ENCODE measurements at regions of chr15 and their contacts with region 1.

Region 1: GRCh38 chr15:99628374-99629001 is 62.7 kb downstream of the MEF2A start:
- DNase-seq: no peak
- H3K4me3 Mint-ChIP-seq: peak overlapping the region; percentile 4
- H3K27ac Mint-ChIP-seq: peak overlapping the region; percentile 28
- H3K4me1 Mint-ChIP-seq: peaks cover 45% of the 10 kb centered on the region
- H3K27me3 Mint-ChIP-seq: no peaks in the 10 kb centered on the region
- CTCF ChIP-seq: no peak

Region 2: GRCh38 chr15:99250494-99251435 is 377.7 kb before region 1 on chr15:
- CTCF ChIA-PET with region 1: no interaction called
- intact Hi-C with region 1: loop called (anchors 5 kb)
- DNase-seq: peak; percentile 98
- H3K4me3 Mint-ChIP-seq: no peak overlapping the region
- H3K27ac Mint-ChIP-seq: peak overlapping the region; percentile 91
- H3K4me1 Mint-ChIP-seq: peaks cover 24% of the 10 kb centered on the region
- H3K27me3 Mint-ChIP-seq: no peaks in the 10 kb centered on the region
- CTCF ChIP-seq: no peak

Region 3: DNA sequence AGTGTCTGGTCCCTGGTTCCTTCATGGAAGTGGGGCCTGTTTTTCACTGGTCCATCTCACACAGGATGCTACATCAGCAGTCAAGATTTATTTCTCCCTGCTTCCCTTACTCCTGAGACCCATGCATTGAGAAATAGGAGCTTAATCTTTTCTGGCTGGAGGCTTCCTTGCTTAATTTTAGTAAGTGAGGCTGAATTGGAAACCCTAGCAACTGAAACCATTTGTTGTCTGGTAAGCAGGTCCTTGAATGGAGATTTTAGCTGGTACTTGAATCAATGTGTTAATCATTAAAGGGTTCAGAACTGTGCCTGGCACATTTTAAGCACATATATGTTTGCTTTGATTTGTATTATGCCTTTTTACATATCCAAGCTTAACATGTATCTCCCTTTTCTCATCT is 82.9 kb before region 1 on chr15:
- CTCF ChIA-PET with region 1: no interaction called
- intact Hi-C with region 1: no loop called
- DNase-seq: no peak
- H3K4me3 Mint-ChIP-seq: no peak overlapping the region
- H3K27ac Mint-ChIP-seq: no peak overlapping the region
- H3K4me1 Mint-ChIP-seq: no peaks in the 10 kb centered on the region
- H3K27me3 Mint-ChIP-seq: no peaks in the 10 kb centered on the region
- CTCF ChIP-seq: no peak

Measured in Calu3 (cell line).